ENCODE measurements at regions of chr22 and their contacts with region 1.

Region 1: GRCh38 chr22:35930933-35931332 is 97.7 kb downstream of the RBFOX2 start:
- DNase-seq: no peak
- H3K4me3 ChIP-seq: no peak overlapping the region
- H3K27ac ChIP-seq: no peak overlapping the region
- H3K4me1 ChIP-seq: no peaks in the 10 kb centered on the region
- H3K27me3 ChIP-seq: no peaks in the 10 kb centered on the region
- CTCF ChIP-seq: peak; percentile 38 to 69 (median 63)
- EP300 ChIP-seq: no peak
- POLR2A ChIP-seq: no peak

Region 2: GRCh38 chr22:36110306-36110881 is 179.5 kb after region 1 on chr22:
- intact Hi-C with region 1: loop called in 1 of 4 experiments (anchors 10 kb)
- DNase-seq: peak in 4 of 5 donors; percentile 32 to 75 (median 38)
- H3K4me3 ChIP-seq: no peak overlapping the region
- H3K27ac ChIP-seq: no peak overlapping the region
- H3K4me1 ChIP-seq: peaks cover 6% of the 10 kb centered on the region
- H3K27me3 ChIP-seq: no peaks in the 10 kb centered on the region
- CTCF ChIP-seq: no peak
- EP300 ChIP-seq: no peak
- POLR2A ChIP-seq: no peak

Region 3: GRCh38 chr22:36123673-36124630 is 193.0 kb after region 1 on chr22:
- intact Hi-C with region 1: loop called in 3 of 4 experiments (anchors 5 to 10 kb)
- DNase-seq: peak; percentile 94 to 97 (median 95)
- H3K4me3 ChIP-seq: peak overlapping the region; percentile 33
- H3K27ac ChIP-seq: peak overlapping the region; percentile 33 to 79
- H3K4me1 ChIP-seq: no peaks in the 10 kb centered on the region
- H3K27me3 ChIP-seq: no peaks in the 10 kb centered on the region
- CTCF ChIP-seq: peak; percentile 94 to 99 (median 98)
- EP300 ChIP-seq: peak; percentile 55
- POLR2A ChIP-seq: peak; percentile 5